HEK293 (cell line): ENCODE measurements at regions of chr7 and their contacts with region 1.

Region 1: GRCh38 chr7:137656227-137656849 is 190.4 kb downstream of the DGKI start:
- H3K4me3 ChIP-seq: no peak overlapping the region
- H3K27ac ChIP-seq: no peak overlapping the region
- H3K4me1 ChIP-seq: no peaks in the 10 kb centered on the region
- CTCF ChIP-seq: no peak

Region 2: GRCh38 chr7:137606061-137606674 is 50.2 kb before region 1 on chr7:
- CTCF ChIA-PET with region 1: interaction called, 23 read pairs
- POLR2A ChIA-PET with region 1: no interaction called
- H3K4me3 ChIP-seq: no peak overlapping the region
- H3K27ac ChIP-seq: no peak overlapping the region
- H3K4me1 ChIP-seq: no peaks in the 10 kb centered on the region
- CTCF ChIP-seq: no peak

Region 3: DNA sequence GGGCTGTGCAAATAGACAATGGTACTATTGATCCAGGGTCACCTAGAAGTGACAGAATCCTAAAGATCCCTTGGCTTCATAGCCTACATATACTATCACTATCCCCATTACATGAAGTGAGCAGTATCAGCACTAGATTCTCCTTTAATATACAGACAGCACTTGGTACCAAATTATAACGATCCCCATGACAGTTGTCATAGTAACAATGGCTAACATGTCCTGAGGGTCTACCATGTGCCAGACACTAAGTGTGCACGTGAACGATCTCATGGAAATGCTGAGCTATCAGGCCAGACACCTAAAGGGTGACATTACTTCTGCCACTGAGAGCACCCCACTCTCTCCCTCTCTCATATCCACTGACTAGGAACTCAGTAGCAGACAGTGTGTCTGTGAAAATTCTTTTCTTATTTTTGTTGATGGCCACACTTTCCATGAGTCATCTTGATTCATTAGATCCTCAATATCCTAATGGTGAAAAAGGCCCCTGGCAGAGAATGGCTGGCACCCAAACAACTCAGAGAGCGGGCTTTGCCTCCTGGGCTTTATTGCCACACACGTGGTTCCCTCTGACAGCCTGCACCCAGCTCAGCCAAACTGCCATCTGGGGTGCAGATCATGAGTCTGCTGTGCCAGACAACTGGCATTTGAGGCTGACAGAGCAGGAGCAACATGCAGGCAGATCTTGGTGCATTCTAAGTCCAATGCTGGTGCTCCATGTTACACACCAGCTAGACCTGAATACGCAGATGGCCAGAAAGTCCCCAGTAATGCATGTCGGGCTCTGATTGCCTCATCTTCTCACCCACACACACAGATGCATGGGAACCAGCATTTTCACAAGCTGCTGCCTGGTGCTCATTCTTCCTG is 14.1 kb after region 1 on chr7:
- CTCF ChIA-PET with region 1: interaction called, 57 read pairs
- POLR2A ChIA-PET with region 1: no interaction called
- H3K4me3 ChIP-seq: no peak overlapping the region
- H3K27ac ChIP-seq: no peak overlapping the region
- H3K4me1 ChIP-seq: no peaks in the 10 kb centered on the region
- CTCF ChIP-seq: no peak

Region 4: DNA sequence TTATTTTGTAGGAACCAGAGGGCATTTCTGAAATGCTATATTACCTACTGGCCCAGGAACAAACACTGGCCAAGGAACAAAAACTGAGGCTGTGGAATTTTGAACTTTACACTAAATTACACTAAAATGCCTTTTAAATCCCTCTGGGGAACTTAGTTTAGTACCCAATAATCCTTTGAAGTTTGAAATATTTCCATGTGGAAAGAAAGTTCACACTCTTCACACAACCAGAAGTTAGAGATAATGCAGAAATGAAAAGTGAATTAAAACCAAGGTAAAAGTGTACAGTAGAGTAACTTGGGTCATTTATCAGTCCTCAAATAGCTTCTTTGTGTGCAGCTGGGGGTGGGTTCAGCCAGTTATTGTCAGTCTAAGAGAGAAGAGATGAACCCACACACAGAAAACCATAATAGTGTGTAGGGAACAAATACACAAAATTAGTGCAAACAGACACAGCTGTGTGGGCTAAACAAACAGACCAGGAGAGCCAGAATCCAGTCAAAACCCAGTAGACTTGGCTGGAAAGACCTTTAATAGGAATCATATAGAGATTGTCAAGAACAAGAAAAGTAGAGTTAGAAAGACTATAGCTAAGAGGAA is 236.9 kb after region 1 on chr7:
- CTCF ChIA-PET with region 1: interaction called, 15 read pairs
- POLR2A ChIA-PET with region 1: no interaction called
- H3K4me3 ChIP-seq: no peak overlapping the region
- H3K27ac ChIP-seq: no peak overlapping the region
- H3K4me1 ChIP-seq: no peaks in the 10 kb centered on the region
- CTCF ChIP-seq: no peak

Region 5: DNA sequence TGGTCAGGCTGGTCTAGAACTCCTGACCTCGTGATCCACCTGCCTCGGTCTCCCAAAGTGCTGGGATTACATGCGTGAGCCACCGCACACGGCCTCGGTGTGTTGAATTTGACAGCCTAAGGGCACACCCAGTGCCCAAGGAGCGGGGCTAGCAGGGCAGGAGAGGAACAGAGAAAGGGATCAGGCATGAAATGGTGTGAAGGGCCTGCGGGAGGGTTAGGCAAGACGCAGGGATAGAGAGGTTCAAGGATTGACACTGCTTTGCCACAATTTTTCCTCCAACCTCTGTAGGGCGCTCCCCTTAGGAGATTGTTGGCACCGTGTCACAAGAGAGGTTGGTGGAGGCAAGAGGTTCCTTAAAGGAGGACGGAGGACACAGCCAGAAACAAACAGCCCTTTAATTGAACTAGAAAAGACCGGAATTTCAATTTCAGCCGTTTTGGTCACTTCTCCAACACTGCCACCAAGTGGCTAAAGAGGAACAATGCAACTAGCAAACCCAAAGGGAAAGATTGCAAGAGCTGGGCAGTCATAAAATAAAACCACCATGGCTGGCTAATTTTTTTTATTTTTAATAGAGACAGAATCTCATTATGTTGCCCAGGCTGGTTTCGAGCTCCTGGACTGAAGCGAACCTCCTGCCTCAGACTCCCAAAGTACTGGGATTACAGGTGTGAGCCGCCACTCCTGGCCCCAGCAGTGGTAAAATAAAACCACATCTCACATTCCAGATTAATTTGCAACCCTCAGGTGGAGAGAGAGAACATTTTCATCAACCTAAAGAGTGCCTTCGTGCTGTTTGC is 352.4 kb after region 1 on chr7:
- CTCF ChIA-PET with region 1: interaction called, 16 read pairs
- POLR2A ChIA-PET with region 1: no interaction called
- H3K4me3 ChIP-seq: no peak overlapping the region
- H3K27ac ChIP-seq: no peak overlapping the region
- H3K4me1 ChIP-seq: no peaks in the 10 kb centered on the region
- CTCF ChIP-seq: peak; percentile 69